CD8-positive, alpha-beta T cell (primary cell): ENCODE measurements at regions of chr2 and their contacts with region 1.

Region 1: GRCh38 chr2:241329669-241330615 is 14.2 kb downstream of the SEPTIN2 start:
- DNase-seq: no peak
- ATAC-seq: no peak
- H3K4me3 ChIP-seq: no peak overlapping the region
- H3K4me3 Mint-ChIP-seq: no peak overlapping the region
- H3K27ac ChIP-seq: no peak overlapping the region
- H3K27ac Mint-ChIP-seq: no peak overlapping the region
- H3K4me1 ChIP-seq: no peaks in the 10 kb centered on the region
- H3K4me1 Mint-ChIP-seq: peaks cover 22% of the 10 kb centered on the region
- H3K27me3 ChIP-seq: no peaks in the 10 kb centered on the region
- H3K27me3 Mint-ChIP-seq: no peaks in the 10 kb centered on the region
- CTCF ChIP-seq: no peak

Region 2: GRCh38 chr2:241257417-241258032 is 72.4 kb before region 1 on chr2:
- CTCF ChIA-PET with region 1: no interaction called
- POLR2A ChIA-PET with region 1: no interaction called
- intact Hi-C with region 1: loop called in 1 of 2 experiments (anchors 5 kb)
- DNase-seq: peak in 1 of 9 experiments; percentile 21
- ATAC-seq: no peak
- H3K4me3 ChIP-seq: no peak overlapping the region
- H3K4me3 Mint-ChIP-seq: no peak overlapping the region
- H3K27ac ChIP-seq: no peak overlapping the region
- H3K27ac Mint-ChIP-seq: no peak overlapping the region
- H3K4me1 ChIP-seq: no peaks in the 10 kb centered on the region
- H3K4me1 Mint-ChIP-seq: no peaks in the 10 kb centered on the region
- H3K27me3 ChIP-seq: no peaks in the 10 kb centered on the region
- H3K27me3 Mint-ChIP-seq: no peaks in the 10 kb centered on the region
- CTCF ChIP-seq: peak; percentile 26